B cell (primary cell): ENCODE measurements at regions of chr3 and their contacts with region 1.

Region 1: DNA sequence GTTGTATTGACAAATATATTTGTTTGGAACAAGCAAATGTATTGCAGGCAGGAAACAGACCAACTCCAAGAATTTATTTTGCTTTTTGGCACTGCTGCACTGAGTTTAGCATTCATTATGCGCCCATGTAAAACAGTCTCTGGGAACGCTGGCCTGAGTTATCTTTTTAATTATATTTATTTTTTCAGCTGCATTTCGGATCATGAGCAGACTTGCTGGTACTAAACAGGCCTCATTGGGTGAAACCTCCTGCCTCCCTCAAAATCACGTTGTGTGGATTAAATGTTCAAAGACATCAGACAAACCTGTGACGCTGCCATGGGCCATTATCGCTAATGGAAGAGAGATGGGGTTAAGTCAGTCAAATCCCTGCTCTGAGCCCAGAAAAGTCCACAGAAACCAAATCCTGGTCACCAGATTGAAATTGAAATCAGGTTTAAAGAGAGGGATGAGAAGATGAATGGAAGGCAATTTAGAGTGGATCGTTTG is 511.1 kb upstream of the PROK2 start:
- DNase-seq: no peak
- ATAC-seq: no peak
- H3K4me3 ChIP-seq: no peak overlapping the region
- H3K4me3 Mint-ChIP-seq: no peak overlapping the region
- H3K27ac ChIP-seq: no peak overlapping the region
- H3K27ac Mint-ChIP-seq: no peak overlapping the region
- H3K4me1 ChIP-seq: no peaks in the 10 kb centered on the region
- H3K4me1 Mint-ChIP-seq: peaks cover under 1% of the 10 kb centered on the region
- H3K27me3 ChIP-seq: peaks cover 0 to 5% (median 2%) of the 10 kb centered on the region in 4 experiments
- H3K27me3 Mint-ChIP-seq: peaks cover 4% of the 10 kb centered on the region
- CTCF ChIP-seq: no peak

Region 2: DNA sequence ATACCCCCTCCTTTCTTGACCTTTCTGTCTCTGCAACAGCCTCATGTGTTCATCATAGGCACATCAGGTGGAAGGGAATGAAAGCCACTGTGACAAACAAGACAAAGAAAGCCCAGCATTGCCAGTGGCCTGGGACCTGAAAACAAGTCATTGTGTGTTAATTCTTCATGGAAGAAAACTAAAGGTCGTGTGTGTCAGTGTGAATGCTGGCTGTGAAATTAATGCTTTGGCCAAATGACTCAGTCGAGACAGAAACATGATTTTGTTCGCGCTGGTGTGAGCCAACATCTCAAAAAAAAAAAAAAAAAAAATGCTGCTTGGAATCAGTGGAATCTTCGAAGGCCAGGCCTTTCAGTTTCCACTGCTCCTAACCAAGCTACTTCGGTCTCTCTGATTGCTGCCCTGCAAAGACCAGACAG is 124.5 kb before region 1 on chr3:
- CTCF ChIA-PET with region 1: no interaction called
- POLR2A ChIA-PET with region 1: interaction called, 11 read pairs
- intact Hi-C with region 1: no loop called
- DNase-seq: no peak
- ATAC-seq: no peak
- H3K4me3 ChIP-seq: no peak overlapping the region
- H3K4me3 Mint-ChIP-seq: no peak overlapping the region
- H3K27ac ChIP-seq: no peak overlapping the region
- H3K27ac Mint-ChIP-seq: peak overlapping the region; percentile 33
- H3K4me1 ChIP-seq: peaks cover 30 to 39% of the 10 kb centered on the region in 2 donors
- H3K4me1 Mint-ChIP-seq: peaks cover 48% of the 10 kb centered on the region
- H3K27me3 ChIP-seq: peaks cover 0 to 5% (median 1%) of the 10 kb centered on the region in 4 experiments
- H3K27me3 Mint-ChIP-seq: peaks cover 30% of the 10 kb centered on the region
- CTCF ChIP-seq: no peak